ENCODE measurements at regions of chr18 and their contacts with region 1.

Region 1: DNA sequence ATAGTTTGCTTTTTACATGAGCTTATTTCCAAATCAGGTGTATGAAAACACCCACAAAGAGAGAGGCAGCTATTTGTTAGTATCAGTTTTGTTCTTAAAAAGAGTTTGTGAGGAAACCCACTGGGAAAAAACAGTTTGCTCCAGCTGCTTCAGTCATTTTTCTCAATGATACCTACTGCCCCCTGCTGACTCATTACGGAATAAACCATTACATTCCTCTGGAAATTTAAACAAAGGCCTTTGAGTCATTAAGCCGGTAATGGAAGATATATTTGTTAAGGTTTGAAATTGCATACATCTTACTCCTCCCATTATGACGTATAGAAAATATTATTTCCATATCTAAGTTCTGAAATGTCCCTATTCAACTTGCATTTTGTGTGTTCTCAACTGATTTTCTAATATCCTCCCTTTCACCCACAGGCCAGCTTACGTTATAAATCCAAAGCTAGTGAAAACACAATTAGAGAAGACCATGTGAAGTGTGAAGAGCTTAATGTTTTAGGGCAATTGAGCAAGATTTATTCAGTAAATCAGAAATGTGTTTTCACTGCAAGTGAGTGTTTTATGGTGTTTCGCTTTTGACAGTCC is 761.6 kb downstream of the DSC3 start:
- DNase-seq: no peak
- ATAC-seq: no peak

Region 2: GRCh38 chr18:28961669-28962228 is 1319.2 kb before region 1 on chr18:
- intact Hi-C with region 1: loop called in 1 of 2 experiments (anchors 5 kb)
- DNase-seq: no peak
- ATAC-seq: no peak

Measured in left cardiac atrium (tissue), 4 donors.